Cardiac septum (tissue), 1 donor: ENCODE measurements at regions of chr1 and their contacts with region 1.

Region 1: DNA sequence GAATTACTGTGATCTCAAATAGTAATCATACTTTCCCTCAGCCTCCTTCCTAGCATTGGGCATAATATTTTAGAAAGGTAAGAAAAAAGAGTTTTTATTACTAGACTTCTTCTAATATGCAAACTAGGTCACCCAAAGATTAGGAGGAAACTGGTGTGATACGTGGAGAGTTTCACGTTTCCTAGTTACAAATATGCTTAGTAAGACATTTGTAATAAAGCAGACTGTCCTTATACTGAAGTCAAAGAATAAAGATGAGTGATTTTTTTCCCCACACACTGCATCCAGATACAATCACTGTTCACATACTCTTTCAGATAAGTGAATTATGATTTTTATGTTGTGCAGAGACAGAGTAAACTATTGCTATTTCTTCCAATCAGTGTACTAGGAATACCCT is 17.9 kb downstream of the LHX8 start:
- DNase-seq: no peak

Region 2: GRCh38 chr1:75198761-75199160 is 46.7 kb after region 1 on chr1:
- intact Hi-C with region 1: no loop called
- DNase-seq: no peak

Region 3: GRCh38 chr1:75916834-75917233 is 764.7 kb after region 1 on chr1:
- intact Hi-C with region 1: loop called (anchors 10 kb)
- DNase-seq: no peak